ENCODE measurements at regions of chr2 and their contacts with region 1.

Region 1: GRCh38 chr2:39227628-39228412 is 15.9 kb downstream of the CDKL4 start:
- DNase-seq: peak; percentile 80
- ATAC-seq: peak; percentile 74
- H3K4me3 Mint-ChIP-seq: peak overlapping the region; percentile 67
- H3K27ac Mint-ChIP-seq: peak overlapping the region; percentile 97
- H3K4me1 Mint-ChIP-seq: peaks cover 44% of the 10 kb centered on the region
- H3K27me3 Mint-ChIP-seq: no peaks in the 10 kb centered on the region
- CTCF ChIP-seq: peak; percentile 86

Region 2: GRCh38 chr2:39059366-39059952 is 168.4 kb before region 1 on chr2:
- CTCF ChIA-PET with region 1: interaction called, 38 read pairs
- POLR2A ChIA-PET with region 1: no interaction called
- DNase-seq: no peak
- ATAC-seq: no peak
- H3K4me3 Mint-ChIP-seq: no peak overlapping the region
- H3K27ac Mint-ChIP-seq: 0 out of 2 replicates have a peak overlapping the region, but pooled peaks have one; percentile 57
- H3K4me1 Mint-ChIP-seq: peaks cover 27% of the 10 kb centered on the region
- H3K27me3 Mint-ChIP-seq: no peaks in the 10 kb centered on the region
- CTCF ChIP-seq: peak; percentile 36; the same call in 1 of the 2 replicates

Region 3: DNA sequence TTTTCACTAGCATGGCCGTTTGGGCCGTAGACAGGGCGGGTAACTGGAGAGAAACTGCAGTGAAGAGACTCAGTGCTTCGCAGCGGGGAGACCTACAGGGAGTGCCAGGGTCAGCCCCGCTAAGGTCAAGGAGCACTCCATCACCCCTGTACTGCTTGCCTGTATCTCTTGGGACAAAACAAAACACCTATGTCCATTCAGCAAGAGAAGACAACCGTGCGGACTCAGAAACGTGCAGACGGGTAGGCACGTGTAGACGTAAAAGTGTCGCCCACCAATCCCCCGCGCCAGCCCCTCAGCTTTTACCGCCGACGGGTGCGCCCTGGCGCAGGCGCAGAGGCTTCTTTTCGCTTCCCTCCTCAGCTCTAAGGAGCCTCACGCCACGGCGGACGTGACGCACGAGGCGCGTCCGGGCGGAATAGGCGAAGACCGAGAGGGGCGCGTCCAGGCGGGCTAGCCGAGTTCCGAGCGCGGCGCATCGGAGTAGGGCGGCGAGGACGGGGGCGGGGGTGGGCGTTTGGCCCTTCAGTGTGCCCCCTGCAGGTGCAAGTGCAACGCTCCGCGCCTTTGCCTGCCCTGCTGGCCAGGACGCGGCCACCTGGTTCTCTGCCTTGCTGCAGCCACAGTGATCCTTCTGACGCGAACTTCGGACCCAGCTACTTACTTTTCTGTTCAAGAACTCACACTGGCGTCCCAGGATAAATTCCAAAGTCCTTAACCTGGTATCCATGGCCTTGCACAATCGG is 103.6 kb before region 1 on chr2:
- CTCF ChIA-PET with region 1: interaction called, 50 read pairs
- POLR2A ChIA-PET with region 1: interaction called, 10 read pairs
- DNase-seq: peak; percentile 99
- ATAC-seq: peak; percentile 77
- H3K4me3 Mint-ChIP-seq: peak overlapping the region; percentile 82
- H3K27ac Mint-ChIP-seq: peak overlapping the region; percentile 100
- H3K4me1 Mint-ChIP-seq: peaks cover 31% of the 10 kb centered on the region
- H3K27me3 Mint-ChIP-seq: no peaks in the 10 kb centered on the region
- CTCF ChIP-seq: peak; percentile 32; the same call in 1 of the 2 replicates

Region 4: DNA sequence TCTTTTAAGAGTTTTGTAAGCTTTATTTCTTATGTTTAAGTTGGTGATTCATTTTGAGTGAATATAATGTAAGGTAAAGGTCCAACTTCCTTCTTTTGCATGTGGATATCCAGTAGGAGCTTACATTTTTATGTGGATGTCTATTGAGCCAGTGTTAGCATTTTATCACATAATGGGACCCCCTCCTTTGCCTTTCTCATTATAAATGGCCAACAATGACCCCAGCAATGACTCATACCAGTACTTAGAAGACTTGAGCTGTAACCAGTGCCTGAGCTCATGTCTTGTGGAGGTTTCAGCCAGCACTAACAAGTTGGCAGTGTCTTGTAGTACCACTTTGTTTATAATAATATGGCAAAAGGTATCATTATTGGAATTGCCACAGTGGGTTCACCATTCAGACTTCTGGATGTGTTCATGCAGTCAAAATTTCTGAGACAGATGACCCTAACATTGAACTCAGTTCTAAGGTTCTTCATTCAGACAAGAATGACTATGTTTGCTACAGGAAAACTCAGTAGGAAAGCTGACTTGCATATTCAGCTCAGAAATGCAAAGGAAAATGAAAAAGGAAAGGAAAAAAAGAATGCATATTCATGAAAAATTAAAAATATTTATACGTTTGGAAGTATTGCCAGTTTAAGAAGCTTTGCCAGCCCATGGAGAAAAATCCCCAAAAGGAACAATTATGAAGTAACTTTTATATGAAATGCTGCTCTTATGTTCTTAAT is 25.0 kb before region 1 on chr2:
- CTCF ChIA-PET with region 1: interaction called, 12 read pairs
- POLR2A ChIA-PET with region 1: interaction called, 3 read pairs
- DNase-seq: no peak
- ATAC-seq: peak; percentile 94
- H3K4me3 Mint-ChIP-seq: peak overlapping the region; percentile 42
- H3K27ac Mint-ChIP-seq: peak overlapping the region; percentile 81
- H3K4me1 Mint-ChIP-seq: peaks cover 22% of the 10 kb centered on the region
- H3K27me3 Mint-ChIP-seq: no peaks in the 10 kb centered on the region
- CTCF ChIP-seq: no peak

Region 5: DNA sequence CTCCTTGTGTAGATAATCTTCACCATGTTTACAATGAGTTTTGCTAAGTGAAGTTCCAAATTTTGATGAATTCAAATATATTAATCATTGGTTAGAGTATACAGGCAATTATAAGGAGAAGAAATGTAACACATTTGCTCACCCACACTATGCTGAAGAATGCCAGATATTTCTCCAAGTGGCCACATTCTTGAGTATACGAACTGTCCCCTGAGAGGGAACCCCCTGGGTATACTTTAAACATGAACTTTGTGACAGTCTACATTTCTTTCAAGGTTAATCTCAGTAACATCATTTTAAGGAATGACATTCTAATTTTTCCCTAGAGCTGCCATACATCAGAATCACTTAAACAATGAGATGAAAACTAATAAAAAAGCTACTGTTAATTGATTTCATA is 55.7 kb after region 1 on chr2:
- CTCF ChIA-PET with region 1: no interaction called
- POLR2A ChIA-PET with region 1: no interaction called
- DNase-seq: no peak
- ATAC-seq: no peak
- H3K4me3 Mint-ChIP-seq: no peak overlapping the region
- H3K27ac Mint-ChIP-seq: no peak overlapping the region
- H3K4me1 Mint-ChIP-seq: peaks cover 3% of the 10 kb centered on the region
- H3K27me3 Mint-ChIP-seq: no peaks in the 10 kb centered on the region
- CTCF ChIP-seq: no peak